Thyroid gland (tissue), 4 donors: ENCODE measurements at regions of chr2 and their contacts with region 1.

Region 1: GRCh38 chr2:158011055-158011771 is 90.5 kb upstream of the UPP2 start:
- DNase-seq: no peak
- H3K4me3 ChIP-seq: no peak overlapping the region
- H3K27ac ChIP-seq: no peak overlapping the region
- H3K4me1 ChIP-seq: peaks cover 3 to 4% of the 10 kb centered on the region in 2 donors
- H3K27me3 ChIP-seq: no peaks in the 10 kb centered on the region
- CTCF ChIP-seq: no peak
- POLR2A ChIP-seq: no peak

Region 2: GRCh38 chr2:157501026-157501425 is 510.2 kb before region 1 on chr2:
- intact Hi-C with region 1: loop called (anchors 5 kb)
- DNase-seq: no peak
- H3K4me3 ChIP-seq: no peak overlapping the region
- H3K27ac ChIP-seq: no peak overlapping the region
- H3K4me1 ChIP-seq: no peaks in the 10 kb centered on the region
- H3K27me3 ChIP-seq: no peaks in the 10 kb centered on the region
- CTCF ChIP-seq: no peak
- POLR2A ChIP-seq: no peak

Region 3: GRCh38 chr2:157784169-157784822 is 226.9 kb before region 1 on chr2:
- intact Hi-C with region 1: loop called (anchors 2 kb)
- DNase-seq: peak; percentile 73 to 81
- H3K4me3 ChIP-seq: no peak overlapping the region
- H3K27ac ChIP-seq: peak overlapping the region; percentile 60 to 78 (median 76)
- H3K4me1 ChIP-seq: peaks cover 62 to 73% of the 10 kb centered on the region in 2 donors
- H3K27me3 ChIP-seq: no peaks in the 10 kb centered on the region
- CTCF ChIP-seq: no peak
- POLR2A ChIP-seq: peak in 1 of 2 donors; percentile 53

Region 4: GRCh38 chr2:157809212-157809611 is 202.0 kb before region 1 on chr2:
- intact Hi-C with region 1: no loop called
- DNase-seq: no peak
- H3K4me3 ChIP-seq: no peak overlapping the region
- H3K27ac ChIP-seq: no peak overlapping the region
- H3K4me1 ChIP-seq: peaks cover 17 to 35% of the 10 kb centered on the region in 2 donors
- H3K27me3 ChIP-seq: no peaks in the 10 kb centered on the region
- CTCF ChIP-seq: no peak
- POLR2A ChIP-seq: no peak